GM10248 (cell line): ENCODE measurements at regions of chr5 and their contacts with region 1.

Region 1: DNA sequence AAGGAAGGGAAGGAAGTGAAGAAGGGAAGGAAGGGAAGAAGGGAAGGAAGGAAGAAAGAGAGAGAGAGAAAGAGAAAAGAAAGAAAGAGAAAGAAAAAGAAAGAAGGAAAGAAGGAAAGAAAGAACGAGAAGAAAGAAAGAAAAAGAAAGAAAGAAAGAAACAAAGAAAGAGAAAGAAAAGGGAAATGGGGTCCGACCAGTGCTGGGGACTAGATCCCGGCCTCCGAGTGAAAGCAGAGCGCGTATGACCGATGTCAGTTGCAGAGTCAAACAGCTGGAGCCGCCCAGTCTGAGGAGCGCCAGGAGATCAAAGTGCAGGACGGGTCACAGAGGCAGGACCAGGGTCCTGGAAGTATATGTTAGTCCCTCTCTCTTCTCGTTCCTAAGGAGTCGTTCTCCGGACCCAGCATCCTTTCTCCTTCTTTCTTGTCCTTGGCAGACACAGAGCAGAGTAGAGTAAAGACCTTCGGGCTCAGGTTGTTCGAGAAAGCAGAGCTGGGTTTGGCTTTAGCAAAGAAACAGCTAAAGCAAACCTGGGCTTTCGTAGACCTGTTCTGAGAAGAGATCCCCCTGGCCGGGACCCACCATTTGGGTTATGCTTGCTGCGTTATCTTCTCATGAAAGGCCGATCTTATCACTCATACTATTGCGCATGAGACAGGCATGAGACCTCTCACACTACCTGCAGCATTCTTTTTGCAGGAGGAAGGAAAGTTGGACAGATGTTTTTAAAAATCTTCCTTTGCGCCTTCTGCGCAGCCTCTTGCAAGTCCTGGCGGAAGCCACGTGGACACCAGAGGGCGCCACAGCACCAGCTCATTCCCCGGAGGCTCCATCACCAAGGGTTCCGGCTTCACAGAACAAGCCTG is 305.2 kb upstream of the MSX2 start:
- DNase-seq: peak; percentile 73
- CTCF ChIP-seq: peak; percentile 94

Region 2: DNA sequence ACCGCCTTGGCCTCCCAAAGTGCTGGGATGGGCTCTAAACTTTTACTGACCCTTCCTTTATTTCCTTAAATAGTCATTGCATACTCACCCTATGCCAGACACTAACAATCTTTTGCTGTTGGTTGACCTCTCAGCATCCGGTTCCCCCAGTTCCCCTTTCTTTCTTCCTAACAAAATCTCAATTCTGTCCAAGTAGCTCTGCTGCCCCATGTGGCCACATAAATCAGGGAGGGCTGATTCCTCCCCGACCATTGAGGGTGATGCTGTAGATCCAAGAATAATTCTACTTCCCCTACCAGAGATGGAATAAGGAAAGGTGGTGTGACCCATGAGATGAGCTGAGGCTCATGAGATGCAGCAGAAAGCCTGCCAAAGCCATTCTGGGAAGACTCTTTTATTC is 10.1 kb before region 1 on chr5:
- CTCF ChIA-PET with region 1: interaction called, 11 read pairs
- POLR2A ChIA-PET with region 1: no interaction called
- DNase-seq: no peak
- CTCF ChIP-seq: no peak

Region 3: DNA sequence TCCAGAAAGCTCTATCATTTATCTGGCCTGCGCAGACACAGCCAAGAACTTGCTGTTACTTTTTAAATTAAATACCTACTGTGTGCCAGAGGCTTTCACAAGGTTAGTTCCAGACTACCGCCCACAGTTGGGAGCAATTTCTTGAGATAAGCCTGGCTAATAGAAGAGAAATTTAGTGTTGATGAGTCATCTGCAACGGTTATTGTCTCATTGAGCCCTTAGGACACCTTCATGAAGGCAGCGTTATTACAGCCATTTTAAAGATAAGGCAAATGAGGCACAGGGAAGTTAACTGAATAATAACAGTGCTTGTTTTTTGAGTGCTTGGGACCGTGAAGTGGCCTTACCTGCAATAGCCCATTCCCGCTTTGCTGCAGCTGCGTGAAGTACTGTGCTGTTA is 12.3 kb after region 1 on chr5:
- CTCF ChIA-PET with region 1: interaction called, 47 read pairs
- POLR2A ChIA-PET with region 1: no interaction called
- DNase-seq: no peak
- CTCF ChIP-seq: no peak

Region 4: GRCh38 chr5:174482607-174483101 is 63.5 kb after region 1 on chr5:
- CTCF ChIA-PET with region 1: no interaction called
- POLR2A ChIA-PET with region 1: no interaction called
- DNase-seq: no peak
- CTCF ChIP-seq: no peak

Region 5: GRCh38 chr5:174608631-174609097 is 189.5 kb after region 1 on chr5:
- CTCF ChIA-PET with region 1: no interaction called
- POLR2A ChIA-PET with region 1: no interaction called
- DNase-seq: no peak
- CTCF ChIP-seq: no peak